HEK293 (cell line): ENCODE measurements at regions of chr19 and their contacts with region 1.

Region 1: DNA sequence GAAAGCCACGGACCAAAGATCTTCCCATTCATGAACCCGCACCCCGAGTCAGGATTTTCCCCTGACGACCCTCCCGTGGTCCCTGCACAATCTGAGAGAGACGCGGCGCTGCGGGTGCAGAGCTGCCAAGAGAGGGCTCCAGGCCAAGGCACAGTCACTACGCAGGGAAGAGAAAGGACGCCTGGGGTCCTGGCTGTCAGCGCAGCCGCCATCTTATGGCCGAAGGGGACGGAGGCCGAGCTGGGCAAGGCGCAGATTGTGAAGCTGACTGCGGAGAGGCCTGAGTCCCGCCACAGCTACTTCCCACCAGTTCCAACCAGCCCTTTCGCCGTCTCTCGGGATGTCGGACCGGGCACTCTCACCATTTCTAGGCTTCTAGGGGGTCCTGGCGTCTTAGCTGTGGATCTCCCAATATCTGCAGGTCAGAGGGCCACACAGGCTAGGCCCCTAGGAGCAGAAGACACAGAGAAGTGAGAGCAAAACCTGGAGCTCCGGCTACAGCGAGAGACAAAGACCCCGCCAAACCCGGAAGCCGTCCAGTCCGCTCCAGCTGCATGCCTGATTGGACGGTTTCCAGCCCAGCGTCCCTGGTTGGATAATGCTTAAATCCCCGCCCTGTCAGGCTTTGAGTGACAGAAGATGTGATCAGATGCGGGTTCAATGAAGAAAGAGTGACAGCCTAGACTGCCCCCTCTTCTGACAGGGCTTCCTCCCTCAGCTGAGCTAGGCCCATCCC is at the start of gene ZNF100:
- H3K4me3 ChIP-seq: peak within 1 kb of the TSS; percentile 97
- H3K27ac ChIP-seq: peak within 1 kb of the TSS; percentile 74
- H3K4me1 ChIP-seq: no peaks in the 10 kb centered on the region
- CTCF ChIP-seq: no peak

Region 2: GRCh38 chr19:21638776-21639175 is 128.5 kb before region 1 on chr19:
- CTCF ChIA-PET with region 1: no interaction called
- POLR2A ChIA-PET with region 1: no interaction called
- H3K4me3 ChIP-seq: no peak overlapping the region
- H3K27ac ChIP-seq: no peak overlapping the region
- H3K4me1 ChIP-seq: no peaks in the 10 kb centered on the region
- CTCF ChIP-seq: no peak

Region 3: GRCh38 chr19:21835810-21836444 is 68.7 kb after region 1 on chr19 and contains the start of gene ZNF43:
- CTCF ChIA-PET with region 1: no interaction called
- POLR2A ChIA-PET with region 1: interaction called, 19 read pairs
- H3K4me3 ChIP-seq: peak within 1 kb of the TSS; percentile 41
- H3K27ac ChIP-seq: no peak within 1 kb of the TSS
- H3K4me1 ChIP-seq: no peaks in the 10 kb centered on the region
- CTCF ChIP-seq: no peak

Region 4: GRCh38 chr19:21851596-21852345 is 84.5 kb after region 1 on chr19:
- CTCF ChIA-PET with region 1: no interaction called
- POLR2A ChIA-PET with region 1: interaction called, 26 read pairs
- H3K4me3 ChIP-seq: peak overlapping the region; percentile 65
- H3K27ac ChIP-seq: peak overlapping the region; percentile 51
- H3K4me1 ChIP-seq: no peaks in the 10 kb centered on the region
- CTCF ChIP-seq: no peak